ENCODE measurements at regions of chr1 and their contacts with region 1.

Region 1: GRCh38 chr1:211476200-211476849 is 15.6 kb downstream of the RD3 start:
- DNase-seq: peak; percentile 78
- ATAC-seq: peak; percentile 80
- H3K4me3 Mint-ChIP-seq: no peak overlapping the region
- H3K27ac Mint-ChIP-seq: no peak overlapping the region
- H3K4me1 Mint-ChIP-seq: peaks cover 6% of the 10 kb centered on the region
- H3K27me3 Mint-ChIP-seq: peaks cover 15% of the 10 kb centered on the region
- CTCF ChIP-seq: peak; percentile 74

Region 2: GRCh38 chr1:211017075-211017748 is 459.1 kb before region 1 on chr1:
- CTCF ChIA-PET with region 1: no interaction called
- POLR2A ChIA-PET with region 1: no interaction called
- DNase-seq: no peak
- ATAC-seq: no peak
- H3K4me3 Mint-ChIP-seq: no peak overlapping the region
- H3K27ac Mint-ChIP-seq: no peak overlapping the region
- H3K4me1 Mint-ChIP-seq: no peaks in the 10 kb centered on the region
- H3K27me3 Mint-ChIP-seq: no peaks in the 10 kb centered on the region; the same call in 1 of the 2 replicates
- CTCF ChIP-seq: no peak

Region 3: DNA sequence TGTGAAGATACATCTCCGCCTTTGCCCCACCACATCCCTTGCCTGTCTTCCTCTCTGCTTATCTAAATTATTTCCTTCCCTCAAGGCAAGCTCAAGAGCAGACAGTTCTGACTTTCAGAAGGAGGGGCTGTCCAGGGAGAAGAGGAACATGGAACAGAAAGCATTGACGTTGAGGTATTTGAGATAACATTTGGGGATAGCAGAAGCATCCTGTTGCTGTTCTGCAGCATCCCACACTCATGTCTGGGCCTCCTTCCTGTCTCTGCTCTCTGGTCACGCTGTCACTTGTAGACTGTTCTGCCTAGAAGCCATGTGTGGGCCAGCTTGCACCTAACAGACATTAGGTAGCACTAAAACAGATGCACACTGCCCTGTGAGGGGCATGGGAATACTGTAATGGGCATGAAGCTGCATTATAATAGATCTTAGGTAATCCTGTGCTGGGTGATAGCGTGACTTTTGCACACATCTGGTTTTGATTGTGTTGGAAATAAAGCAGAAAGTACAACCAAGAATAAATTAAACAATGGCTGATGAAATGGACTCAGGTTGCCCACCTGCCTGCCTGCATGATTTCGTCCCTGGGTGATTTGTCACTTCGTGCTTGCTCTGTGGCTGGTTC is 16.3 kb after region 1 on chr1:
- CTCF ChIA-PET with region 1: interaction called, 27 read pairs
- POLR2A ChIA-PET with region 1: no interaction called
- DNase-seq: no peak
- ATAC-seq: no peak
- H3K4me3 Mint-ChIP-seq: no peak overlapping the region
- H3K27ac Mint-ChIP-seq: no peak overlapping the region
- H3K4me1 Mint-ChIP-seq: peaks cover 6% of the 10 kb centered on the region
- H3K27me3 Mint-ChIP-seq: no peaks in the 10 kb centered on the region; the same call in 1 of the 2 replicates
- CTCF ChIP-seq: no peak

Region 4: DNA sequence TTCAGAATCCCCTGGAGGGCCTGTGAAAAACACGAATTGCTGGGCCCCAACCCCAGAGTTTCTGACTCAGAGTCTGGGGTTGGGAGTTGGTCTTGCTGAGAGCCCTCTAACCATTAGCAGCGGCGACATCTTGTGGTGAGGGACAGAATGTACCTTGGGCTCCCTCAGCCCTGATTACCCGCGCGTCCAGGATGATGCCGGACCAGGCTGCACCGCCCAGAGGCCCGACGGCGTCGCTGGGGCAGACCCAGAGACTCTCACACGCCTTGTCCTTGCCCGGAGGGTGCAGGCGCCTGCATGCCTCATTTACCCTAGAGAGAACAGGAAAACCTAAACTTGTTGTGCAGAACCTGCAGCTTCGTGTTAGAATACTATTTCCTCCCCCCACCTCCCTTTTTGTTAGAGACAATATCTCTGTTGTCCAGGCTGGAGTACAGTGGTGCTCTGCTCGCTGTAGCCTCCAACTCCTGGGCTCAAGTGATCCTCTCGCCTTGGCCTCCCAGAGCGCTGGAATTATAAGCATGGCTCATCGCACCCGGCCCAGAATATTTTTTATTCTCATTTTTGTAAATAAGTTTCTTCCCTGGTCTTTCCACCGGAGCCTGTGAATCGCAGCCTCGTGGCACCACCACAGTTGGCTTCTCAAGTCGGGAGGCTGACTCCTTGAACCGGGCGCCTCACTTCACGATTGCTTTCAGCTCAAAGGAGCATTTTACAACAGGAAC is 37.9 kb after region 1 on chr1:
- CTCF ChIA-PET with region 1: interaction called, 24 read pairs
- POLR2A ChIA-PET with region 1: interaction called, 4 read pairs
- DNase-seq: peak; percentile 91
- ATAC-seq: peak; percentile 87
- H3K4me3 Mint-ChIP-seq: peak overlapping the region; percentile 43
- H3K27ac Mint-ChIP-seq: no peak overlapping the region
- H3K4me1 Mint-ChIP-seq: peaks cover 14% of the 10 kb centered on the region
- H3K27me3 Mint-ChIP-seq: peaks cover 25% of the 10 kb centered on the region
- CTCF ChIP-seq: peak; percentile 60